PC-3 (cell line): ENCODE measurements at regions of chr10 and their contacts with region 1.

Region 1: GRCh38 chr10:114393482-114393881 is 10.8 kb downstream of the AFAP1L2 start:
- DNase-seq: peak; percentile 19
- ATAC-seq: no peak
- H3K4me3 ChIP-seq: no peak overlapping the region
- H3K27ac ChIP-seq: no peak overlapping the region
- H3K4me1 ChIP-seq: peaks cover 56% of the 10 kb centered on the region
- H3K27me3 ChIP-seq: no peaks in the 10 kb centered on the region
- CTCF ChIP-seq: no peak

Region 2: GRCh38 chr10:113169853-113170460 is 1223.5 kb before region 1 on chr10:
- CTCF ChIA-PET with region 1: no interaction called
- POLR2A ChIA-PET with region 1: no interaction called
- intact Hi-C with region 1: no loop called
- DNase-seq: no peak
- ATAC-seq: no peak
- H3K4me3 ChIP-seq: no peak overlapping the region
- H3K27ac ChIP-seq: no peak overlapping the region
- H3K4me1 ChIP-seq: no peaks in the 10 kb centered on the region
- H3K27me3 ChIP-seq: no peaks in the 10 kb centered on the region
- CTCF ChIP-seq: no peak

Region 3: GRCh38 chr10:114173603-114173920 is 219.9 kb before region 1 on chr10:
- CTCF ChIA-PET with region 1: no interaction called
- POLR2A ChIA-PET with region 1: no interaction called
- intact Hi-C with region 1: no loop called
- DNase-seq: no peak
- ATAC-seq: peak; percentile 3
- H3K4me3 ChIP-seq: peak overlapping the region; percentile 98
- H3K27ac ChIP-seq: peak overlapping the region; percentile 58
- H3K4me1 ChIP-seq: peaks cover 11% of the 10 kb centered on the region; the same call in 1 of the 2 replicates
- H3K27me3 ChIP-seq: no peaks in the 10 kb centered on the region
- CTCF ChIP-seq: no peak

Region 4: GRCh38 chr10:114356751-114357514 is 36.5 kb before region 1 on chr10:
- CTCF ChIA-PET with region 1: no interaction called
- POLR2A ChIA-PET with region 1: no interaction called
- intact Hi-C with region 1: loop called (anchors 5 kb)
- DNase-seq: peak; percentile 56
- ATAC-seq: peak; percentile 87
- H3K4me3 ChIP-seq: no peak overlapping the region
- H3K27ac ChIP-seq: no peak overlapping the region
- H3K4me1 ChIP-seq: peaks cover 24% of the 10 kb centered on the region
- H3K27me3 ChIP-seq: no peaks in the 10 kb centered on the region
- CTCF ChIP-seq: no peak

Region 5: GRCh38 chr10:114374053-114374791 is 19.3 kb before region 1 on chr10:
- CTCF ChIA-PET with region 1: interaction called, 3 read pairs
- POLR2A ChIA-PET with region 1: no interaction called
- intact Hi-C with region 1: loop called (anchors 2 kb)
- DNase-seq: no peak
- ATAC-seq: no peak
- H3K4me3 ChIP-seq: no peak overlapping the region
- H3K27ac ChIP-seq: no peak overlapping the region
- H3K4me1 ChIP-seq: peaks cover 18% of the 10 kb centered on the region
- H3K27me3 ChIP-seq: no peaks in the 10 kb centered on the region
- CTCF ChIP-seq: no peak

Region 6: GRCh38 chr10:114453576-114453975 is 60.1 kb after region 1 on chr10:
- CTCF ChIA-PET with region 1: no interaction called
- POLR2A ChIA-PET with region 1: no interaction called
- intact Hi-C with region 1: no loop called
- DNase-seq: no peak
- ATAC-seq: no peak
- H3K4me3 ChIP-seq: no peak overlapping the region
- H3K27ac ChIP-seq: no peak overlapping the region
- H3K4me1 ChIP-seq: no peaks in the 10 kb centered on the region
- H3K27me3 ChIP-seq: no peaks in the 10 kb centered on the region
- CTCF ChIP-seq: no peak